Activated naive CD4-positive, alpha-beta T cell treated with anti-CD3 and anti-CD28 coated beads, Interleukin-2, amount 10 ng/mL, durations not matched to agents 7 days and 5 days (primary cell): ENCODE measurements at regions of chr15 and their contacts with region 1.

Region 1: DNA sequence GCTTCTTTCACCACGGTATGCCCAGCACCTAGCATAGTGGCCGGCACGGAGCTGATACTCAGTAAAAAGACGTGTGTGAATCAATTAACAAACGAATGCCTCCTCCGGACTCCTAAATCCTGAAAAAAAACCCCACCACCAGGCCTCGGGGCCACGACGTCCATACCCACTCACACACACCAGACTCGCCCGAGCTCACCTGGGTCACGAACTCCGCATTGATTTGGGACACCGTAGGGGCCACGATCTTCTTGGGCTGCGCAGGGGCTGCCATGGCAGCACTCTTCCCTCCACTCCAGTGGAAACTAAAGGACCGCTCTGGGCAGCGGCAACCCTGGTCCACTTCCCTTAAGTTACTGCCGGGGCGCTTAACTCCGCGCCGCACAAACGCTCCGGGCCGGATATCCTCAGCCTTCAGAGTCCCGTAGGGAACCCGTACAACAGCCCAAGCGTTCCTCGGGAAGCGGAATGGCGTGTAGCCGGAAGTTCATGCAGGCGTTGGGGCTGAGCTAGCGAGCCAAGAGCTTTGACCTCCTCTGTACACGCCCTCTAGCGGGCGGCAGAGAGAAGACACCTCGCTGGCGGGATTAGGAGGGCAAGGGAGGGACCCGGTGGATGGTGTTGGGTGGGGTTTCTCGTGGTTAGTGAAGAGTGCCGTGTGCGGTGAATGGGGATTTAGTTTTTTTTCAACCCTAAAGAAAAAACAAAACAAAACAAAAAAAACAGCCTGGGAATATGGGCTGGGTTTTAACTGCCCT is at the start of gene AQR:
- DNase-seq: peak; percentile 95
- H3K4me3 Mint-ChIP-seq: peak within 1 kb of the TSS; percentile 93
- H3K27ac Mint-ChIP-seq: peak within 1 kb of the TSS; percentile 85
- H3K4me1 Mint-ChIP-seq: peaks cover 41% of the 10 kb centered on the region
- H3K27me3 Mint-ChIP-seq: no peaks in the 10 kb centered on the region

Region 2: GRCh38 chr15:34987985-34988873 is 18.7 kb after region 1 on chr15 and contains the start of gene ZNF770:
- CTCF ChIA-PET with region 1: interaction called, 26 read pairs
- DNase-seq: peak; percentile 81
- H3K4me3 Mint-ChIP-seq: peak within 1 kb of the TSS; percentile 93
- H3K27ac Mint-ChIP-seq: peak within 1 kb of the TSS; percentile 99
- H3K4me1 Mint-ChIP-seq: peaks cover 47% of the 10 kb centered on the region
- H3K27me3 Mint-ChIP-seq: no peaks in the 10 kb centered on the region